BJ (cell line): ENCODE measurements at regions of chr2 and their contacts with region 1.

Region 1: DNA sequence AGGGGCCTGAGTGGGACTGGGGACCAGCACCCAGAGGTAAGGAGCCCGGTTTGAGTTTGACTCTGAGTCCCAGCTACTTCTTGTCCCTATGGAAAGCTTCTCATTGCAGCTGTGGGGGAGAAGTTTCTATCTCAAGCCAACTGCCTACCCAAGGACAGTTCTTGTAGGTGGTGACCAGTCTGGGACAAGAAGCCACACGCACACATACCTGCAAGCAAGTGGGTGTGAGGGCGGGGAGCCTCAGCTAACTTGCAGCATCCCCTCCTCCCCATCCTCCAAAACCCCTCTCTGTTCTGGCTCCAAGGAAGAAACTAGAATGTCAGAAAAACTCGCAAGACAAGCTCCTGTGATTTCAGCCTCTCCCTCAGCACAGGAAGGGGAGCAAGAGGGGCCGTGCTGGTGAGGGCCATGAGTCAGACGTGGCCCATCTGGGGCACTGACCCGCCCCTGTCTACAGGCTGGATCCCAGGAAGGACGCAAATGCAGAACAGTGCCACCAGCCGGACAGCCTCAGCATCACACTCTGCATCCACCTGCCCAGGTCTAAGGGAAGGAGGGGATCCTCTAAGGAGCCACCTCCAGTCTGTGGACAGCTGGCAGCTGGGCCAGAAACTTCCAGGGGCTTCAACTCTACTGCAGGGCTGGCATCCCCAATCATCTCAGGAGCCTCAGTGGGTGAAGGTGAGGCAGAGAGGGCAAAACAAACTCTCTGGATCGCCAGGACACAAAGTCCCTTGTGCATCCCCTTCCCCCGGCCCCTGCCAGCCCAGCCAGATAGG is 103.4 kb downstream of the TNS1 start:
- DNase-seq: peak; percentile 50
- H3K4me3 ChIP-seq: no peak overlapping the region
- H3K27me3 ChIP-seq: no peaks in the 10 kb centered on the region
- CTCF ChIP-seq: peak; percentile 84

Region 2: GRCh38 chr2:217886720-217887309 is 12.6 kb before region 1 on chr2:
- CTCF ChIA-PET with region 1: interaction called, 21 read pairs
- POLR2A ChIA-PET with region 1: no interaction called
- DNase-seq: no peak
- H3K4me3 ChIP-seq: no peak overlapping the region
- H3K27me3 ChIP-seq: no peaks in the 10 kb centered on the region
- CTCF ChIP-seq: peak; percentile 81

Region 3: DNA sequence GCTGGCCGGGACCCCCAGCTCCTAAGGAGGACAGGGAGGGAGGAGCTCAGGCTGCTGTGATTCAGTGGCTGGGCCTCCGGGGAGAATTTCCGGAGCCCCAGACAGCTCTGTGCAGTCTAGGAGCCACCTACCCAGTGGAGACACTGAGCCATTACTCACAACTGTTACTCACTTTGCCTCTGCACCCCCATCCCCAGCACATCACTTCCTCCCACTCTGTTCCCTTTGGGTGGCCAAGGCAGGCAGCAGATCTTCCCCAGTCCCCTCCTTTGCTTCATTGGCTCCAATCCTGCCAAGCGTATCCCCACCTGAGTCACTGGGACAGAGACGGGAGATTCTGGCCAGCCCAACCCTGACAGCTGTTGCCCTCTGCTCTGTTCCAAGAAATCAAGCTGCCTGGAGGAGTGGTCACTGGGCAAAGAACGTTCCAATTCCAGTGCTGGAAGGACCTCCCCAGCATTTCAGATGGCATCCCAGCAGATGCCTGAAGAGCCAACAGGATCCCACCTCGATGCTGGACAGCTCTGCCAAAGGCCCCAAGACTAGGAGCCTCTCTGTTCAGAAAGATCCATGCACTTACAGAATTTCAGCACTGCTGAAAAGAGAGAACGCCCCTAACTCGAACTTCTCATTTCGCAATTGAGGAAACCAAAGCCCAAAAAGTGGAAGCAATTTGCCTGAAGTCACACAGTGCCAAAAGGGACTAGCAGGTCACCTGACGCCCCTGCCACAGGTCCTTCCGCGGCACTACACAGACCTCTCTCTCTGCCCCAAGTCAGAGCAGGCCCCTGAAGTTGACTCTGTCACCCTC is 35.1 kb after region 1 on chr2:
- CTCF ChIA-PET with region 1: interaction called, 11 read pairs
- POLR2A ChIA-PET with region 1: no interaction called
- DNase-seq: peak; percentile 80
- H3K4me3 ChIP-seq: no peak overlapping the region
- H3K27me3 ChIP-seq: no peaks in the 10 kb centered on the region
- CTCF ChIP-seq: no peak

Region 4: GRCh38 chr2:217943446-217944389 is 44.3 kb after region 1 on chr2:
- CTCF ChIA-PET with region 1: interaction called, 13 read pairs
- POLR2A ChIA-PET with region 1: no interaction called
- DNase-seq: no peak
- H3K4me3 ChIP-seq: peak overlapping the region; percentile 37
- H3K27me3 ChIP-seq: no peaks in the 10 kb centered on the region
- CTCF ChIP-seq: peak; percentile 46

Region 5: GRCh38 chr2:217993817-217994463 is 94.5 kb after region 1 on chr2:
- CTCF ChIA-PET with region 1: interaction called, 20 read pairs
- POLR2A ChIA-PET with region 1: no interaction called
- DNase-seq: no peak
- H3K4me3 ChIP-seq: no peak overlapping the region
- H3K27me3 ChIP-seq: no peaks in the 10 kb centered on the region
- CTCF ChIP-seq: peak; percentile 78